Calu3 (cell line): ENCODE measurements at regions of chr1 and their contacts with region 1.

Region 1: DNA sequence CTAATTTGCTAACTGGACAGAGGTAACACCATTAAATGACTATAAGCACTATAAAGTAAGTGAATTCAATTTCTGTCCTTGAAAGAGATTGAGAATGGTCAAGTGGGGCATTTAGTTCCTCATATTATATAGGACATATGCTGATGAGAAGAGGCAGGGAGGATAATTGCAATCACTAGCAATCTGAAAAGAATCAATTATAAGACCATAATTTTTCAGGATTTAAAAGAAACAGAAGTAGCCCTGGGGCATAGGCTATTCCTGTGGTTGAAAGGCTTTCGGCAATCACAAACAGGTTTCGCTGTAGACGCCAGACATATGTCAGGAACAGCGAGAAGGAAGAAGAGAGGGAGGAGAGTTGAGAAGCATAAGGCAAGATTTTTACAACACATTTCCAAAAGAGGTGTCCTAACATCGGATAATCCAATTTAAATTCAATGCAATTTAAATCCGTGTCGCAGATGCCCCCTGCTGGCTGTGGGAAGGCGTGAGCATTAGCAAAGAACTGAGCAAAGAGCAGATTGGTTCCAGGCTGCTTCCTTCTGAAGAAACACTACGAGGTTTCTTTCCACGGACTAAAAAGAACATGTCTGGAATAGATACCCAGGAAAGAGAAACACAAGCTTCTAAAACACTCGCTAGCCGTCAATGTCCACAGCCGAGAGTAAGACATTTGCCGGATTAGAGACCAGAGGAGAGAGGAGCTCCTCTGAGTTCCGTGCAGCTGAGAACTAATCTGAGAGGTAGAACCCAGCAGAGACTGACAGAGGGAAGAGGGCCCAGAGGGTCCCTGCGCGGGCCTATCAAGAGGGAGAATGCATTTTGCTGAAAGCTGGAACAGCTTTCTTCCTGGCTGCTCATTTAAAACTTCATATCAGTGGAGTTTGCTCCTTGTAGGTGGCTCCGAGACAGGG is 27.9 kb downstream of the RGS5 start:
- DNase-seq: peak; percentile 71
- H3K4me3 Mint-ChIP-seq: no peak overlapping the region
- H3K27ac Mint-ChIP-seq: no peak overlapping the region
- H3K4me1 Mint-ChIP-seq: peaks cover 41% of the 10 kb centered on the region
- H3K27me3 Mint-ChIP-seq: no peaks in the 10 kb centered on the region
- CTCF ChIP-seq: peak; percentile 85

Region 2: GRCh38 chr1:162854245-162854882 is 320.4 kb before region 1 on chr1:
- CTCF ChIA-PET with region 1: interaction called, 7 read pairs
- intact Hi-C with region 1: loop called (anchors 1 kb)
- DNase-seq: peak; percentile 79
- H3K4me3 Mint-ChIP-seq: no peak overlapping the region
- H3K27ac Mint-ChIP-seq: no peak overlapping the region
- H3K4me1 Mint-ChIP-seq: peaks cover 30% of the 10 kb centered on the region
- H3K27me3 Mint-ChIP-seq: no peaks in the 10 kb centered on the region
- CTCF ChIP-seq: peak; percentile 78

Region 3: DNA sequence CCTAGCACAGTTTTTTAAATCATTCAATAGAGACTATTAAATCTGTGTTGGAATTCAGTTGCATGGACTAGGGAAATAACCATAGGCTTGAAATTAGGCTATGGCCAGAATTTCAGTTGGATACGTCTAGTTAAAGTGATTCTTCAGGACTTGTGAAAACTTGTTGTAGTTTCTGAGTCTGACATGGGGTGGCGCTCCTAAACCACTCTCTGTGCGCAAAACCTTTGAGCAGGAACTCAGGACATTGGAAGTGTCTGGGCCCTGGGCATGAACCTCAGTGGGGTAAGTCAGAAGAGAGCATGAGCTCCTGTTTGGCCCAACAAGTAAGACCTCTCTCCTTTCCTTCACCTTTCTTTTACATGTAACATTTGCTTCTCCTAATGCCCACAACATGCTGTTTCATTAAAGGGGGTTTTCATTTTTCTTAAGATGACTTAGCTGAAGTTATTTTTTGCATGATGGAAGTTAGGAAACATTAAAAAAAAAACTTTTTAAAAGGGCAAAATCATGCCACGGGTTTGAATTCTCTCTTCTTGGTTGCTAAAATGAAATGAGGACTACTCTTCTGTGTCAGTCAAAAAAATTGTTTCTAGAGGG is 296.7 kb before region 1 on chr1:
- CTCF ChIA-PET with region 1: interaction called, 4 read pairs
- intact Hi-C with region 1: loop called (anchors 1 kb)
- DNase-seq: peak; percentile 78
- H3K4me3 Mint-ChIP-seq: no peak overlapping the region
- H3K27ac Mint-ChIP-seq: no peak overlapping the region
- H3K4me1 Mint-ChIP-seq: peaks cover 7% of the 10 kb centered on the region
- H3K27me3 Mint-ChIP-seq: peaks cover 11% of the 10 kb centered on the region
- CTCF ChIP-seq: peak; percentile 87

Region 4: GRCh38 chr1:162987866-162988265 is 186.9 kb before region 1 on chr1:
- CTCF ChIA-PET with region 1: no interaction called
- intact Hi-C with region 1: loop called (anchors 5 kb)
- DNase-seq: no peak
- H3K4me3 Mint-ChIP-seq: no peak overlapping the region
- H3K27ac Mint-ChIP-seq: no peak overlapping the region
- H3K4me1 Mint-ChIP-seq: no peaks in the 10 kb centered on the region
- H3K27me3 Mint-ChIP-seq: no peaks in the 10 kb centered on the region
- CTCF ChIP-seq: no peak

Region 5: DNA sequence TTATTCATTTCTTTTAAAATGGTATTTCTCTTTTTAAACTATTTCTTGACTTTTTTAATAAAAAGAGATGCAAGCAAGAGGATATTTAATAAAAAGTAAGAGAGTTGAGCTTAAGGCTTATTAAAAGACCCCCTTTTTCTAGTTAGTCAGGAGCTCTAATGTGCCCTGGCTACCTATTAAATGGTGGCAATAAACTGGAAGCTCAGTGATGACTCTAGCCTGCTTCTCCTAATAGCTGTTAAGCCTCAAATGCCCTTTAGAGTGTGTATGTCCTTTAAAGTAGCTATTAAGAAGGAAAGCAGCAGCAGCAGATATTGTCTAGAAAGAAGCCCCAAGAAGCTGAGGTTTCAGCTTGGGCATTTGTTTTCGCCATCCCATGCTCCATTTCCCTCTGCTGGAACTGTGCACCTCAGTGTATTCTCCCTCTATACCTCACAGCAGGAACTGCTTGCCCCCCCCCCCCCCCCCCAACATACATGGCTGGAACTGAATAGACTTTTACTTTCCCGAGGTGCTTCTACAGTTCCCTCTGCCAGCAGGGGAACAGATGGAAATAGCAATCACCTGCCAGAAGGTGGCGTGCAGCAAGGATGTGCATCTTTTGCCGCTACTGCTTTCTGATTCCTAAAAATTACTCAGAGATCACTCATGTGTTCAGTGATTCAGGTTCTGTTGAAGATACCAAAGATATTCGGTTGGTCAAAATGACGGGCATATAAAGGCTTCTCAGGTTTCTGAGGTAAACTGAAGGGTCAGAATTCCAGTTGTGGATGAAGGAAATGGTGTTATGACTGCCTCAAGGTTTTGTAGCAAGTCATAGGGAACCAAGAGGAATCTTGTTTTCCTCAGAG is 103.2 kb before region 1 on chr1:
- CTCF ChIA-PET with region 1: interaction called, 10 read pairs
- intact Hi-C with region 1: loop called (anchors 1 kb)
- DNase-seq: peak; percentile 79
- H3K4me3 Mint-ChIP-seq: no peak overlapping the region
- H3K27ac Mint-ChIP-seq: no peak overlapping the region
- H3K4me1 Mint-ChIP-seq: no peaks in the 10 kb centered on the region
- H3K27me3 Mint-ChIP-seq: peaks cover 41% of the 10 kb centered on the region
- CTCF ChIP-seq: peak; percentile 81

Region 6: GRCh38 chr1:163085041-163085903 is 89.5 kb before region 1 on chr1:
- CTCF ChIA-PET with region 1: no interaction called
- intact Hi-C with region 1: loop called (anchors 5 kb)
- DNase-seq: no peak
- H3K4me3 Mint-ChIP-seq: no peak overlapping the region
- H3K27ac Mint-ChIP-seq: peak overlapping the region; percentile 5
- H3K4me1 Mint-ChIP-seq: peaks cover 26% of the 10 kb centered on the region
- H3K27me3 Mint-ChIP-seq: no peaks in the 10 kb centered on the region
- CTCF ChIP-seq: no peak

Region 7: DNA sequence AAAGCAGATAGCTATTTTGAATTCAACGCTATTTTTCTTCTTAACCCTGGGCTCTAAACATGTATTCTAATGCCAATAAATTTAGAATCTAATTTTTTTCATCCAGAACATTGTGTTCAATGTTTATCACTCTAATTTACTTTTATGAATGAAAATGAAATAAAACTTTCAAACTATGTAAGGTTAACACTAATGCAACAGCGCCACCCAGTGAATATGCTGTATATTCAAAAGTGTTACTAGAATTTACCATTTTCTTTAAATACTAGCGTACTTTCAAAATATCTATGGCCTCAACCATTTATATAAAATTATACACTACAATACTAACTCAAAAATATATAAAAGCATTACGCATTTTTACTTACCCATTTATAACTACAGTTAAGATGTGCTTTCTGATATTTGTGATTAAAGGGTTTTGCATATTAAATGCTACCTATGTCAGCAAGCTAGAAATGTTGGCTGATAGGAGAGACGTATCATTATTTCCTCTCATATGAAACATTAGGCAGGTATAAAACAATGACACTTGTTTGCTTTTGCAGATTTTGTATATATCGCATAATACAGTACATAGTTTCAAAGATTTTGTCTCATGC is 141.1 kb after region 1 on chr1:
- CTCF ChIA-PET with region 1: no interaction called
- intact Hi-C with region 1: loop called (anchors 1 kb)
- DNase-seq: peak; percentile 59
- H3K4me3 Mint-ChIP-seq: no peak overlapping the region
- H3K27ac Mint-ChIP-seq: no peak overlapping the region
- H3K4me1 Mint-ChIP-seq: peaks cover 4% of the 10 kb centered on the region
- H3K27me3 Mint-ChIP-seq: no peaks in the 10 kb centered on the region
- CTCF ChIP-seq: peak; percentile 55